ENCODE measurements at regions of chr1 and their contacts with region 1.

Region 1: DNA sequence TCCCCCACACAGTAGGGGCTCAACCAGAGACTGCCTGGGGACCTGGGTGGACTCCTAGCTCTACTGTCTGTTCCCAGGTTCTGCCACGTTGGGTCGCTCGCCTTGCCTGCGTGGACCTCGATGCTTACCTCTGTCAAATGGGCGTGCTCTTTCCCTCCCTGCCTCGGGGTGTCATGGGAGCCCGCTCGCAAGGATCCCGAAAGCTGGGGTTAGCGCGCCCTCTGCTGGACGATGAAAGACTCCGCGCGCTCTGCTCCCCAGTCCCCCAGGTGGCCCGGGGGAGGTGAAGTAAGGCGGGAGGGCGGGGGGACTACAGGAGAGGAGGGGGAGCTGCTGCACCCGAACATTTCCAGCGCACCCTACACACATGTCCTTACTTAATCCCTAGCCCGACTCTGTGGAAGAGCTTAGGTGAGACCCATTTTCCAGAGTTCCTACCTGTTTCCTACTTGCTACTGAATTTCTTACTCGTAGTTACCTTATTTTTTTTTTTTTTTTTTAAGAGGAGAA is 2.3 kb upstream of the BSND start:
- DNase-seq: peak; percentile 88
- H3K4me3 Mint-ChIP-seq: no peak overlapping the region
- H3K27ac Mint-ChIP-seq: no peak overlapping the region
- H3K4me1 Mint-ChIP-seq: peaks cover 5% of the 10 kb centered on the region
- H3K27me3 Mint-ChIP-seq: no peaks in the 10 kb centered on the region
- CTCF ChIP-seq: peak; percentile 80

Region 2: DNA sequence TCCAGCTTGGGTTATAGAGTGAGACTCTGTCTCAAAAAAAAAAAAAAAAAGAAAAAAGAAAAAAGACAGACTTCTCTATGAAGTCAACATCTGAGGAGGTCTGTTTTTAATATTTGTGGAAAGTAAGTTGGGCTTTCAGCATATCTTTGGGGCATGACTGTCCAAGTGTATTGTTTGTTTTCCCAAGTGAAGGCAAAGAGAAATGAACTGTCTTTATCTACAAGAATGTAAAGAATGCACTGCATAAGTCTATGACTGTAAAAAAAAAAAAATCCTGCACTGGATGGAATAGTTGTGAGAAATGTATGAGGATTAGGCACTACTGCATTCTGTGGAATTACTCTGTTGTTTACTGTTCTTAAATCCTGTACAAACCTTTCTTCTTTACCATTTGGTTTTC is 61.5 kb before region 1 on chr1:
- CTCF ChIA-PET with region 1: interaction called, 13 read pairs
- POLR2A ChIA-PET with region 1: no interaction called
- intact Hi-C with region 1: no loop called
- DNase-seq: no peak
- H3K4me3 Mint-ChIP-seq: no peak overlapping the region
- H3K27ac Mint-ChIP-seq: no peak overlapping the region
- H3K4me1 Mint-ChIP-seq: peaks cover 20% of the 10 kb centered on the region
- H3K27me3 Mint-ChIP-seq: no peaks in the 10 kb centered on the region
- CTCF ChIP-seq: no peak

Region 3: GRCh38 chr1:54965624-54966340 is 30.6 kb before region 1 on chr1:
- CTCF ChIA-PET with region 1: interaction called, 22 read pairs
- POLR2A ChIA-PET with region 1: interaction called, 3 read pairs
- intact Hi-C with region 1: no loop called
- DNase-seq: peak; percentile 82
- H3K4me3 Mint-ChIP-seq: no peak overlapping the region
- H3K27ac Mint-ChIP-seq: no peak overlapping the region
- H3K4me1 Mint-ChIP-seq: peaks cover 30% of the 10 kb centered on the region
- H3K27me3 Mint-ChIP-seq: no peaks in the 10 kb centered on the region
- CTCF ChIP-seq: no peak

Region 4: DNA sequence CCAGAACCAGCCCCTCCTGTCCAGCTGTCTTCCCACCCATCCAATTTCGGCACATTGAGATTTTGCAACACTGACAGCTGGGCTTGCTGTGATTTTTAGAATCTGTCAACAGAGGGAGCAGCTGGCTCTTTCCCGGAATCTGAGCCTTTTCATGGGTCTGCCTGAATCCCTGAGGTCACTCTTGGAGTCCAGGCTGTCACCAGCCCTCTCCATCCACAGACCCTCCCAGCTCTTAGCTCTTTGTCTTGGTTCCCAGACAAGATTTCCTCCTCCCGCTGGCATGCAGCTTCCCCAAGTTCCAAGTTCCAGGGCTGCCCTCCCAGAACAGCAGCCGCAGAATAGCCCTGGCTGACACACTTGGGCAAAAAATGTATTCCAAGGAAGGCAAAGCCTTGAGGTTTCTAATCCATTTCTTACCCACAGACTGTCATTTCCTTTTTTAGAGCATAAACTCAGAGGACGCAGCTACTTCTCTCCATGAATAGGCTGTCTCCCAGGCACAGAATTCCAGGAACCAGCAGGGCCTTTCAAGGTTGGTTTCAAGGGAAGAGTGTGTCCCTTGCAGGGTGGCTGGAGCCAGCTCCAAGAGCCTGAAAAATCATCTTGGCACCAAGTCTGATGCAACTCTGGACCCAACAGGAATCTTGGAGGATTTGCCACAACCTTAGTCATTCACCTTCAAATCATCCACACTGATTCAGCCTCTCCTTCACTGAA is 23.1 kb before region 1 on chr1:
- CTCF ChIA-PET with region 1: interaction called, 23 read pairs
- POLR2A ChIA-PET with region 1: no interaction called
- intact Hi-C with region 1: no loop called
- DNase-seq: peak; percentile 54
- H3K4me3 Mint-ChIP-seq: no peak overlapping the region
- H3K27ac Mint-ChIP-seq: peak overlapping the region; percentile 49
- H3K4me1 Mint-ChIP-seq: peaks cover 30% of the 10 kb centered on the region
- H3K27me3 Mint-ChIP-seq: no peaks in the 10 kb centered on the region
- CTCF ChIP-seq: peak; percentile 34

Region 5: GRCh38 chr1:55007625-55008024 is 11.2 kb after region 1 on chr1:
- CTCF ChIA-PET with region 1: interaction called, 19 read pairs
- POLR2A ChIA-PET with region 1: no interaction called
- intact Hi-C with region 1: no loop called
- DNase-seq: peak; percentile 10
- H3K4me3 Mint-ChIP-seq: no peak overlapping the region
- H3K27ac Mint-ChIP-seq: no peak overlapping the region
- H3K4me1 Mint-ChIP-seq: peaks cover 6% of the 10 kb centered on the region
- H3K27me3 Mint-ChIP-seq: peaks cover 7% of the 10 kb centered on the region
- CTCF ChIP-seq: no peak

Region 6: GRCh38 chr1:55021965-55022546 is 25.6 kb after region 1 on chr1:
- CTCF ChIA-PET with region 1: interaction called, 24 read pairs
- POLR2A ChIA-PET with region 1: no interaction called
- intact Hi-C with region 1: loop called (anchors 1 kb)
- DNase-seq: peak; percentile 93
- H3K4me3 Mint-ChIP-seq: no peak overlapping the region
- H3K27ac Mint-ChIP-seq: peak overlapping the region; percentile 85
- H3K4me1 Mint-ChIP-seq: peaks cover 27% of the 10 kb centered on the region
- H3K27me3 Mint-ChIP-seq: peaks cover 3% of the 10 kb centered on the region
- CTCF ChIP-seq: peak; percentile 92

Measured in MCF 10A (cell line).